HEK293 (cell line): ENCODE measurements at regions of chr11 and their contacts with region 1.

Region 1: GRCh38 chr11:18243783-18244362 is 4.6 kb downstream of the SAA2 start:
- H3K4me3 ChIP-seq: no peak overlapping the region
- H3K27ac ChIP-seq: no peak overlapping the region
- H3K4me1 ChIP-seq: no peaks in the 10 kb centered on the region
- CTCF ChIP-seq: no peak

Region 2: DNA sequence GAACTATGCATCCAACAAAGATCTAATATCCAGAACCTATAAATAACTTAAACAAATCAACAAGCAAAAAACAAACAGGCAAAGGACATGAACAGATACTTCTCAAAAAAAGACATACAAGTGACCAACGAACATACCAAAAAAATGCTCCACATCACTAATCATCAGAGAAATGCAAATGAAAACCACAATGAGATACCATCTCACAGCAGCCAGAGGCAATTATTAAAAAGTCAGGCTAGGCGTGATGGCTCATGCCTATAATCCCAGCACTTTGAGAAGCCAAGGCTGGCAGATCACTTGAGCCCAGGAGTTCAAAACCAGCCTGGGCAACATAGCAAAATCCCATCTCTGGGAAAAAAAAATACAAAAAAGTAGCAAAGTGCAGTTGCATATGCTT is 18.0 kb before region 1 on chr11:
- CTCF ChIA-PET with region 1: interaction called, 27 read pairs
- POLR2A ChIA-PET with region 1: no interaction called
- H3K4me3 ChIP-seq: no peak overlapping the region
- H3K27ac ChIP-seq: no peak overlapping the region
- H3K4me1 ChIP-seq: no peaks in the 10 kb centered on the region
- CTCF ChIP-seq: no peak

Region 3: DNA sequence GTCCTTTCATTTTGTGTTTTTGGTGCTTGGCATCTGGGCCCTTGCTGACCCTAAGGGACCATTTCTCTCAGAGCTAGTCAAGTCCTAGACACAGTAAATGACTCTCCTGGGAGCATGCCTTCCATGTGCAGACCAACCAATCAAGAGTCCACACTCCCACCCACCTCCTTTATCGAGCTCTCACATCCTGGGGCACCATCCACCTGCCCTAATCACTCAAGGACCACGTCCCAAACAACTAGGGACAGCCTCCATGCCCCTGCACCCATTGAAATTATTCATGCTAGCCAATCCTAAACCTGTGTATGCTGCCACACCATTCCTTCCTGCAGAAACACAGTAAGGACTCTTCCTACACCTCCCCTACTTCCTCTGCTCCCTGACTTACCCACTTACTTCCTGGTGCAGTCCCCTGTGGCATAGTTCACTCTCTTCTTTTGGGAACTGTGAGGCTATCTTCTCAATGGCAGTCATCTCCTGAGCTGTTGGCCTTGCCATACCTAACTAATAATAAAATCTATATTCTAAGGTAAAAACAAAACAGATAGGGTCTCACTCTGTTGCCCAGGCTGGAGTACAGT is 11.0 kb after region 1 on chr11:
- CTCF ChIA-PET with region 1: interaction called, 12 read pairs
- POLR2A ChIA-PET with region 1: no interaction called
- H3K4me3 ChIP-seq: no peak overlapping the region
- H3K27ac ChIP-seq: no peak overlapping the region
- H3K4me1 ChIP-seq: no peaks in the 10 kb centered on the region
- CTCF ChIP-seq: no peak

Region 4: GRCh38 chr11:18294862-18295261 is 51.0 kb after region 1 on chr11:
- CTCF ChIA-PET with region 1: interaction called, 10 read pairs
- POLR2A ChIA-PET with region 1: no interaction called
- H3K4me3 ChIP-seq: no peak overlapping the region
- H3K27ac ChIP-seq: no peak overlapping the region
- H3K4me1 ChIP-seq: no peaks in the 10 kb centered on the region
- CTCF ChIP-seq: no peak

Region 5: GRCh38 chr11:18650859-18651557 is 407.1 kb after region 1 on chr11:
- CTCF ChIA-PET with region 1: interaction called, 14 read pairs
- POLR2A ChIA-PET with region 1: no interaction called
- H3K4me3 ChIP-seq: no peak overlapping the region
- H3K27ac ChIP-seq: no peak overlapping the region
- H3K4me1 ChIP-seq: no peaks in the 10 kb centered on the region
- CTCF ChIP-seq: peak; percentile 41; the same call in 1 of the 2 replicates